ENCODE measurements at regions of chr12 and their contacts with region 1.

Region 1: GRCh38 chr12:43338848-43339526 is 213.0 kb downstream of the ADAMTS20 start:
- DNase-seq: peak; percentile 4
- H3K4me3 Mint-ChIP-seq: peak overlapping the region; percentile 45
- H3K27ac Mint-ChIP-seq: peak overlapping the region; percentile 52
- H3K4me1 Mint-ChIP-seq: no peaks in the 10 kb centered on the region
- H3K27me3 Mint-ChIP-seq: no peaks in the 10 kb centered on the region
- CTCF ChIP-seq: peak; percentile 19

Region 2: DNA sequence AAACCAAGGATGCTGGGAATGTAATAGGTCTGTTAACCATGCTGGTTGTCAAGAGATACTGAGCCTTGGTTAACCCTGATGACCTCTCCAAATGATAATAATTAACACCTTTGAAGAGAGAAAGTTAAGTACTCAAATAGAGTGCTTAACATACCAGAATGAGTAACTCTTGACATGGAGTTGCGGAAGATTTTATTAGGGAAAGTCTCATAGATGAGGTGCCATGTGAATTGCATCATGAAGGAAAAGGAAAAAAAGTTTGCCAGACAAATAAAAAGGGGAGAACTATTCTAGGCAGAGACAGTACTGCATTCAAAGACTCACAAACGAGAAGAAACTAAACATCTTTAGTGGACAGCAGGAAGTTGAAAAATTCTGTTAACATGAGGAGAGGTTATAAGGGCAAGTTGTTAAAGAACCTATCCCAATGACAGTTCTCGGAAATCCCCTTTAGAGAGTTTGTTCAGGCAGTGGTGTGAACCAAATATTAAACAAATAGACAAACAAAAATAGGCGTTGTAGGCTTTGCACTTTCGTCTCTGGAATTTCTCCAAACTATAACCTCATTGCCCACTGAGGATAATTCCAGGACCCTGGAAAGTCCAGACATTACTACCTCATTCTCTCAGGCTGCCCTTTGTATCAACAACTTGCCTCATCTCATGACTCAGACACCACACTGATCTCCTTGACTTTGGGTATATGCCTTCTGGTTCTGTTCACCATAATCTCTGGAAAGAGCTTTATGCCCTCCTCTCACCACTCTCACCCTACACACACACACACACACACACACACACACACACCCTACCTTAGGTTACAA is 1629.3 kb before region 1 on chr12:
- CTCF ChIA-PET with region 1: no interaction called
- intact Hi-C with region 1: no loop called
- DNase-seq: peak; percentile 5
- H3K4me3 Mint-ChIP-seq: peak overlapping the region; percentile 10
- H3K27ac Mint-ChIP-seq: peak overlapping the region; percentile 75
- H3K4me1 Mint-ChIP-seq: peaks cover 27% of the 10 kb centered on the region
- H3K27me3 Mint-ChIP-seq: no peaks in the 10 kb centered on the region
- CTCF ChIP-seq: no peak

Region 3: GRCh38 chr12:42129595-42130204 is 1209.3 kb before region 1 on chr12:
- CTCF ChIA-PET with region 1: no interaction called
- intact Hi-C with region 1: loop called (anchors 10 kb)
- DNase-seq: peak; percentile 41
- H3K4me3 Mint-ChIP-seq: no peak overlapping the region
- H3K27ac Mint-ChIP-seq: no peak overlapping the region
- H3K4me1 Mint-ChIP-seq: peaks cover 13% of the 10 kb centered on the region
- H3K27me3 Mint-ChIP-seq: no peaks in the 10 kb centered on the region
- CTCF ChIP-seq: peak; percentile 21

Region 4: DNA sequence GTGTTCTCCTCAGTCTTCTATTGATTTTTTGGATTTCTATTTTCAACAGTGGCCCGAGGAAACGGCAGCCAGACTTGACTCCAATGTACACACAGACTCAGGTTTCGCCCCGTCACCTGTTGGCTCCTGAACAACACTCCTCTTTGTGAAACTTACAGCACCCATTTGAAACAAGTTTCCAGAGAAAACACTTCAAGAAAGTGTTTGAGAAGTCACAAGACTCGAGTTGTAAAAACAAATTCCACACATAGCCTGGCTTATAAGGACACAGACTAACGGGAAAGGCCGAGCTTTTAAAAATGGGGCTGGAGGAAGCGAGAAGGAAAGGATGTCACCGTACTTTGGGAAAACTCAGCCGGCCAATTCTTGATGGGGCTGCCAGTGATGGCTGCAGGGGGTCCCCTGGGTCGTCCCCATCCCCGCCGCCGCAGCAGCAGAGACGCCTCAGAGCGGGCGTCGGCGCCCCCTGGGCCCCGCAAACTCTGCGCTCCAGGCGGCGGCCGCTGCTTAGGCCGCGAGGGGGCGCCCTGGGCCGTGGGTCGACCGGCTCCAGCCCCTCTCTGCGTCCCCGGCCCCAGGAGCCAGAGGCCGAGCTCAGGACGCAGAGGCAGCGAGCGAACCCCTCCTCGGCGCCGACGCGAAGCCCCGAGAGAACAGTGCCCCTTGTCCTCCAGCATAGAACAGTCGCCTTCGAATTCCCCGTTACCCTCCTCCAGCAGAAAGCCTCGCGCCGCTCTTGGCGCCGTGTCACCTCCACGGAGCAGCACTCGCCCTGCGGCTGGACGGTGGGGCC is 856.3 kb before region 1 on chr12:
- CTCF ChIA-PET with region 1: interaction called, 8 read pairs
- intact Hi-C with region 1: loop called (anchors 2 kb)
- DNase-seq: peak; percentile 86
- H3K4me3 Mint-ChIP-seq: peak overlapping the region; percentile 96
- H3K27ac Mint-ChIP-seq: peak overlapping the region; percentile 66
- H3K4me1 Mint-ChIP-seq: peaks cover 9% of the 10 kb centered on the region
- H3K27me3 Mint-ChIP-seq: no peaks in the 10 kb centered on the region
- CTCF ChIP-seq: peak; percentile 59

Region 5: GRCh38 chr12:42574851-42575266 is 764.1 kb before region 1 on chr12:
- CTCF ChIA-PET with region 1: interaction called, 5 read pairs
- intact Hi-C with region 1: loop called (anchors 5 kb)
- DNase-seq: no peak
- H3K4me3 Mint-ChIP-seq: no peak overlapping the region
- H3K27ac Mint-ChIP-seq: no peak overlapping the region
- H3K4me1 Mint-ChIP-seq: peaks cover 5% of the 10 kb centered on the region
- H3K27me3 Mint-ChIP-seq: no peaks in the 10 kb centered on the region
- CTCF ChIP-seq: no peak

Region 6: DNA sequence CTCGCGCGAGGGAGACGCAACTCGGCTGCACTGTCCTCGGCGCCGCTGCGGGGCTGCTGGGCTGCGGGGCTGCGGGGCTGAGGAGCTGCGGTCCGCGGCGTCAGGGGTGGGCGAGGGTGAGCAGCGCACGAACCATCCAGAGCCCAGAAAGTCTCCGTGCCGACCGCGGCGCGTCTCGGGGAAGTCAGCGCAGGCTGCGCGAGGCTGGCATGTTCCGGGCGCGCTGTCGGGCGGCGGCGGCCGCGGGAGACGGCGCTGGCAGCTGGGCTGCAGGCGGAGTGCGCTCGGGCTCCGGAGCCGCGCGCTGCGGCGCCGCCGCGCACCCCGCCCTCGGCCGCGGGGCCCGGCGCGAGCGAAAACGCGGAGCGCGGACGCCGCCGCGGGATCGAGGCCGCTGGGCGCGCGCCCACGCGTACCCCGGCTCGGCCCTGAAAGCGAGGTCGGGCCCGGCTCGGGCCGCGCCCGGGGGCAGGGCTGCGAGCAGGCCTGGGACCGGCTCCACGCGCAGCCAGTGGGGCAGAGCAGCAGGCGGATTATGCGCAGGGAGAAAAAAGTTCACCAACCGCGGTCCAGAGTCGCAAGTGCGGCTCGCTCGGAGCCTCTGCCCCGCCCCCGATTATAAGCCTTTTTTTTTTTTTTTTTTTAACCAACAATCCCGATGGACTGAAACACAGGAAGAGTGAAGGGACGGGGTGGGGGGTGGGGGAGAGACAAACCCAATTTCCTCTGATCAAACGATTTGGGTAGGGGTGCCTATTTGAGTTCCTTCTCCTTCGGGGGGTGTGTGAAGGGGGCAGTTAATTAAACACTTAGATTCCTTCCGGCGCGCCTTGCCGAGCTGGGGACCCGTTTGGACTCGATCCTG is 749.3 kb before region 1 on chr12 and contains the start of gene PRICKLE1:
- CTCF ChIA-PET with region 1: no interaction called
- intact Hi-C with region 1: loop called (anchors 5 kb)
- DNase-seq: peak; percentile 48
- H3K4me3 Mint-ChIP-seq: peak within 1 kb of the TSS; percentile 81
- H3K27ac Mint-ChIP-seq: peak within 1 kb of the TSS; percentile 36
- H3K4me1 Mint-ChIP-seq: peaks cover 15% of the 10 kb centered on the region
- H3K27me3 Mint-ChIP-seq: no peaks in the 10 kb centered on the region
- CTCF ChIP-seq: no peak
- total RNA-seq, gene PRICKLE1: 7.0 and 12.7 TPM in 2 replicates

Region 7: GRCh38 chr12:42790761-42791151 is 548.2 kb before region 1 on chr12:
- CTCF ChIA-PET with region 1: no interaction called
- intact Hi-C with region 1: loop called (anchors 10 kb)
- DNase-seq: peak; percentile 56
- H3K4me3 Mint-ChIP-seq: no peak overlapping the region
- H3K27ac Mint-ChIP-seq: peak overlapping the region; percentile 63
- H3K4me1 Mint-ChIP-seq: peaks cover 29% of the 10 kb centered on the region
- H3K27me3 Mint-ChIP-seq: no peaks in the 10 kb centered on the region
- CTCF ChIP-seq: no peak

Region 8: DNA sequence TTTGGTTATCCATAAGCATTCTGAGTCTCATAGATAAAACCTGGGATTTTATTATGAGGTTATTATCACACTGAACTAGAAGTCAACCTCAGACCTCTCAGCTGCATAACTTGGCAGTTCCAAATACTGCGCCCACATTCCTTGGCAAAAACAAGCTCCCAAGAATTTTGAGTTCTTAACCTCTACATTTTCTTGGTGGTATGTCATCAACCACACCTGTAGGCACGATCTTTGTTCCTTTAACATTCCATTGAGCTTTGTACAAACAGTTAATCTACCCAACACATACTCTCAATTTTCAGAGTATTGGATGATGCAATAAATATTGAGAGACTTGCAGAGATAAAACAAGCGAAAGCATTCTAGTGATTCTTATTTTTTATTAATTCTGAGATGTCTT is 377.6 kb before region 1 on chr12:
- CTCF ChIA-PET with region 1: interaction called, 6 read pairs
- intact Hi-C with region 1: loop called (anchors 1 kb)
- DNase-seq: peak; percentile 66
- H3K4me3 Mint-ChIP-seq: no peak overlapping the region
- H3K27ac Mint-ChIP-seq: peak overlapping the region; percentile 67
- H3K4me1 Mint-ChIP-seq: peaks cover 49% of the 10 kb centered on the region
- H3K27me3 Mint-ChIP-seq: no peaks in the 10 kb centered on the region
- CTCF ChIP-seq: no peak

Region 9: DNA sequence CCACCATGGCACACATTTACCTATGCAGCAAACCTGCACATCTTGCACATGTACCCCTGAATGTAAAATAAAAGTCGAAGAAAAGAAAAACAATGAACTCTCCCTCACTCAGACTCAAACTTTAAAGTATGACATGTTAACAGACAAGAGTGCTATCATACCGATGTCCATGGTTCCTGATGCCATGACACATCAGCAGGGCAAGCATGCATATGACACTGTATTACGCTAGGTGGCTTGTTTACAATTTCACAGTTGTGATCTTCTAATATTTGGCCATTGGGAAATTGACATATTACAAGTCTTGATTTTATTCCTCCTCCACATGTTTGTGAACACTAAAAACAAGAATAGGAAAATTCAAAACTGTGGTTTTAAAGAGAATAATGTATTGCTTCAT is 86.4 kb after region 1 on chr12:
- CTCF ChIA-PET with region 1: no interaction called
- intact Hi-C with region 1: no loop called
- DNase-seq: no peak
- H3K4me3 Mint-ChIP-seq: no peak overlapping the region
- H3K27ac Mint-ChIP-seq: no peak overlapping the region
- H3K4me1 Mint-ChIP-seq: no peaks in the 10 kb centered on the region
- H3K27me3 Mint-ChIP-seq: no peaks in the 10 kb centered on the region
- CTCF ChIP-seq: no peak

Measured in Calu3 (cell line).